ENCODE measurements at regions of chr3 and their contacts with region 1.

Region 1: DNA sequence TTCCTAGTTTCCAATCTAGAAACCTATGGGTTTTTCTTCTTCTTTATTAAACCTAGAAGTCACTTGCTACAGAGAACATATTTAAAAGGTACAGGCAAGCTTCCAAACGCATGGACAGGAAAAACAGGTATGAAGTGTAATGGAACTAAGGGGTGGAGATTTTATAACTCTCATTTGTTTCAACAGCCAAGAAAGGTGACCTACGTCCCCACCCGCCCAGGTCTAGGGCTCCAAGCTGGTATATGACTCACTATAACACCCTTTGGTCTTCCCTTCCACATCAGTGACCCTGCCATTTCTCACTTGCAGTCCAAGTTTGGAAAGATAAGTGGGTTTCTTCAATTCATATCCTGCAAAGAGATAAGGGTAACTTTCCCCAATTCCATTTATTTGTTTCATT is 6.0 kb upstream of the LIPH start:
- DNase-seq: peak; percentile 81 to 88
- H3K4me3 ChIP-seq: no peak overlapping the region
- H3K4me3 Mint-ChIP-seq: peak overlapping the region; percentile 88
- H3K27ac Mint-ChIP-seq: peak overlapping the region; percentile 97
- H3K4me1 ChIP-seq: peaks cover 35% of the 10 kb centered on the region
- H3K4me1 Mint-ChIP-seq: peaks cover 11% of the 10 kb centered on the region
- H3K27me3 ChIP-seq: no peaks in the 10 kb centered on the region
- H3K27me3 Mint-ChIP-seq: no peaks in the 10 kb centered on the region
- CTCF ChIP-seq: no peak

Region 2: DNA sequence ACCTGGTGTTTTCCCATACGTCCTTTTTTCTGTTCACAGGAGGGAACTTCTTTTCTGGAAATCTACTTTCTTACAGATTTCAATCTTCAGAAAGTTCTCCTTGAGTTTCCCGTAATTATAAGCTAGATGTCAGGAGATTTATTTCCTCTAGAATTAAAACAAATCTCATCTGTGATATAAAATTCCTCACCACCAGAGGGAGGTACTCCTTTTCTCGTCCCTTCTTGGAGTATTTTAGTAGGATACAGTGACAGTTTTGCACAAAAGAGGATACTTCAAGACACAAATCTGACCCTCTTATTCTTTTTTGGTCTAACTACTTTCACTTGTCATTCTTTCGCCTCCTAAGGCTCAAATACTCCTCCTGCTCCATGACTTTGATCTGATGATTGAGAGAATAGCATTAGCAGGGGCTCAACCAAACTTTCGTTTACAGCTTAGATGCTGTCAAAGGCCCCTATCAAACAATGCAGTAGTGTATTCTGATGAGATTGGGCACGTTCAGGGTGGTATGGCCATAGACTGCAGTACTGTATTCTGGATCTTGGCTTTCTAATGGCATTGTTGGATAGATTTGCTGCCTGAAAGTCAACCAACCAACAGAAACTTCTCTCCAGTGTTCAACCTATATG is 97.6 kb before region 1 on chr3:
- CTCF ChIA-PET with region 1: interaction called, 14 read pairs
- POLR2A ChIA-PET with region 1: no interaction called
- intact Hi-C with region 1: loop called (anchors 1 kb)
- DNase-seq: peak in 1 of 2 experiments; percentile 34
- H3K4me3 ChIP-seq: no peak overlapping the region
- H3K4me3 Mint-ChIP-seq: no peak overlapping the region
- H3K27ac Mint-ChIP-seq: no peak overlapping the region
- H3K4me1 ChIP-seq: no peaks in the 10 kb centered on the region
- H3K4me1 Mint-ChIP-seq: no peaks in the 10 kb centered on the region
- H3K27me3 ChIP-seq: no peaks in the 10 kb centered on the region
- H3K27me3 Mint-ChIP-seq: no peaks in the 10 kb centered on the region
- CTCF ChIP-seq: peak; percentile 25 to 33

Region 3: DNA sequence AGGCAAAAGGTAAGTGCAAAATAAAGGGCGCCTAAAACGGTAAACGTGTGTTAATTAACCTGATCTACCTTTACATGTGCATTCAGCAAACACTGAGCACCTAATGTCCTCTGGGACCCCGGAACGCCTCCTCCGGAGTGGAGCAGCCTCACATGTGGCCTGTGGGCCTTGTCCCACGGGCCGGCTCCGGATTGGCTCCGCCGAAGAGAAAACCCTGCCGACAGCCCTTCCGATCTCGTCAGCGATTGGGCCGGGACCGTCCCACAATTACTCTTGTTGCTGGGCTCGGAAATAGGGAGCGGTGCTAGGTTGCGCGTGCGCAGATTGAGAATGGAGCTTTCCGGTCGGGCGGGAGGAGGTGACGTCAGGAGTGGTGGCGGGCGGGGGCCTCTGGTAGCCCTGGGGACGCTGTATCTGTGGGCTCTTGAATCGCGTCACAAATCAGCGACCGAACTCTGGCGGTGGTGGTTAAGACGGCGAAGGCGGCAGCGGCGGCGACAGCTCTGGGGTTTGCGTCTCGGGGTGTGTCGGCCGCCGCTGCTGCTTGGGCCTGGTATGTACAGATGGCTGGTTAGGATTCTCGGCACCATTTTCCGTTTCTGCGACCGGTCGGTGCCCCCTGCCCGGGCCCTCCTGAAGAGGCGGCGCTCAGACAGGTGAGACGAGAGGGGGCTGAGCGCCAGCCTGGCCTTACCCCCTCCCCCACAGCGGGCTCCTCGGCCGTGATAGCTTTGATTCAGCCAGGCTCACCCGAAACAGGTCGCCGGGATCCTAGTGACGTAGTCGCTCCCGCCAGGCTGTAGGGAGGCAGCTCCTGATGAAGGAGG is 27.7 kb after region 1 on chr3 and contains the start of gene SENP2:
- CTCF ChIA-PET with region 1: interaction called, 13 read pairs
- POLR2A ChIA-PET with region 1: interaction called, 8 read pairs
- intact Hi-C with region 1: no loop called
- DNase-seq: peak; percentile 99
- H3K4me3 ChIP-seq: peak within 1 kb of the TSS; percentile 74
- H3K4me3 Mint-ChIP-seq: peak within 1 kb of the TSS; percentile 95
- H3K27ac Mint-ChIP-seq: peak within 1 kb of the TSS; percentile 99
- H3K4me1 ChIP-seq: no peaks in the 10 kb centered on the region; the same call in 1 of the 2 replicates
- H3K4me1 Mint-ChIP-seq: no peaks in the 10 kb centered on the region
- H3K27me3 ChIP-seq: no peaks in the 10 kb centered on the region
- H3K27me3 Mint-ChIP-seq: no peaks in the 10 kb centered on the region
- CTCF ChIP-seq: no peak
- total RNA-seq, gene SENP2: 52.4 and 53.5 TPM in 2 replicates

Measured in Caco-2 (cell line).